Activated CD4-positive, alpha-beta memory T cell treated with anti-CD3 and anti-CD28 coated beads for 36 hours (primary cell): ENCODE measurements at regions of chr15 and their contacts with region 1.

Region 1: GRCh38 chr15:33201491-33202231 is 7.1 kb upstream of the FMN1 start:
- DNase-seq: peak; percentile 76
- H3K4me3 Mint-ChIP-seq: peak overlapping the region; percentile 63
- H3K27ac Mint-ChIP-seq: peak overlapping the region; percentile 61
- H3K4me1 Mint-ChIP-seq: peaks cover 30% of the 10 kb centered on the region
- H3K27me3 Mint-ChIP-seq: peaks cover 15% of the 10 kb centered on the region

Region 2: GRCh38 chr15:33104212-33104611 is 97.4 kb before region 1 on chr15:
- CTCF ChIA-PET with region 1: no interaction called
- POLR2A ChIA-PET with region 1: no interaction called
- intact Hi-C with region 1: loop called (anchors 5 kb)
- DNase-seq: peak; percentile 37
- H3K4me3 Mint-ChIP-seq: no peak overlapping the region
- H3K27ac Mint-ChIP-seq: no peak overlapping the region
- H3K4me1 Mint-ChIP-seq: peaks cover 3% of the 10 kb centered on the region
- H3K27me3 Mint-ChIP-seq: peaks cover 15% of the 10 kb centered on the region

Region 3: DNA sequence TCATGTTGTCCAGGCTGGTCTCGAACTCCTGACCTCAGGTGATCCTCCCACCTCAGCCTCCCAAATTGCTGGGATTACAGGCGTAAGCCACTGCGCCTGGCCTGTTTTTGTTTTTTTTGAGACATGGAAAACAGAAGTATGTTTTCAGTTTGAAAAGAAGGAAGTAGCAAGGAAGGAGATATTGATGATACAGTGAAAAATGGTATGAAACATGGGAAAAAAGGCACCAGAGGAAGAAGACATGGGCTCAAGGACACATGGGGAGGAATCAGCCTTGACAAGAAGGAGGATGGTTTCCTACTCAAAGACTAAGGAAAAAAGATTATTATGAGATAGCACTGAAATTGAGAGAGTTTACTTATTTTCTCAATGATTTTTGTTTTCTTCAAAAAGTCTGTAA is 37.8 kb before region 1 on chr15:
- CTCF ChIA-PET with region 1: no interaction called
- POLR2A ChIA-PET with region 1: no interaction called
- intact Hi-C with region 1: loop called (anchors 1 kb)
- DNase-seq: no peak
- H3K4me3 Mint-ChIP-seq: no peak overlapping the region
- H3K27ac Mint-ChIP-seq: no peak overlapping the region
- H3K4me1 Mint-ChIP-seq: peaks cover 3% of the 10 kb centered on the region
- H3K27me3 Mint-ChIP-seq: peaks cover 14% of the 10 kb centered on the region

Region 4: DNA sequence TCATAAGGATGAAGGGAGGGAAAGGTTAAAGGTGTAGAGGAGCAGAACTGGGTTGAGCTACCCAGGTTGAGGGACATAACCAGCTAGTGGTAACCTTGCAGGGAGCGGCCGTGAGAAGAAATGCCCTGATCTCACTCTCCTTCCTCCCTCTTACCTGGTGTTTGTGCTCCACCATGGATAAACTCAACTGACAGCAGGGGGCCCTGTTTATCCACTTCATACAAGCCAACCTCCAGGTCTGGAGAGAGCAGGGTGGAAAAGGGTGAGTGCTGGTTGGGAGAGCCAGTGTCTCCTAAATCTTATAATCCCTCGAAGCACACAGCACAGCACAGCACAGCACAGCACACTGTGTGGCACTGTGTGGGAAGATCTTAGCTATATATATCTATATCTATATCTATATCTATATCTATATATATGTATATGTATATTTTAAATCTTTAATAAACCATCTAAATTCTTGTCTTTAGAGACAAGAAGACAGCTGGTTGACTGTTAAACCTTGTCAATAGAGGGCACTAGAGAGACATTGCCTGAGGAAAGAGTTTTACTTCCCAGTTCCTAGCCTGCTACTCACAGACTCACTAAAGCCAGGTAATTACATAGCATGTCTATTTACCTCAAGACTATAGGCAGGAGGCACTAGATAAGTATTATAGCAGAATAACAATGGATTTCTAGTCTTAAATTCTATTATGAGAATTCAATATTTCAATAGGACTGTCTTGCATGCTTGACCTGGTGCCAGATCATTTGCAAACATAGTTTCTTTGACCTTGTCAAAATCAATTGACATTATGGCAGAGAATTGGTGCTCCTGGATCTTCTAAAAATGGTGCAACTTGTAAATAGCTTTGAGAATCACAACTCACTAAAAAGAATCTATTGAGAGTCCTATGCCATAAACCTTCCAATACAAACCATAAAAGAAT is 14.5 kb after region 1 on chr15:
- CTCF ChIA-PET with region 1: interaction called, 10 read pairs
- POLR2A ChIA-PET with region 1: no interaction called
- intact Hi-C with region 1: no loop called
- DNase-seq: no peak
- H3K4me3 Mint-ChIP-seq: no peak overlapping the region
- H3K27ac Mint-ChIP-seq: no peak overlapping the region
- H3K4me1 Mint-ChIP-seq: no peaks in the 10 kb centered on the region
- H3K27me3 Mint-ChIP-seq: peaks cover 3% of the 10 kb centered on the region

Region 5: GRCh38 chr15:33234014-33234461 is 32.4 kb after region 1 on chr15:
- CTCF ChIA-PET with region 1: no interaction called
- POLR2A ChIA-PET with region 1: no interaction called
- intact Hi-C with region 1: no loop called
- DNase-seq: no peak
- H3K4me3 Mint-ChIP-seq: no peak overlapping the region
- H3K27ac Mint-ChIP-seq: no peak overlapping the region
- H3K4me1 Mint-ChIP-seq: no peaks in the 10 kb centered on the region
- H3K27me3 Mint-ChIP-seq: peaks cover 9% of the 10 kb centered on the region